B cell (primary cell): ENCODE measurements at regions of chr6 and their contacts with region 1.

Region 1: GRCh38 chr6:90537723-90538258 is 49.1 kb downstream of the MAP3K7 start:
- DNase-seq: peak; percentile 66
- ATAC-seq: peak; percentile 84
- H3K4me3 ChIP-seq: no peak overlapping the region
- H3K4me3 Mint-ChIP-seq: peak overlapping the region; percentile 68
- H3K27ac ChIP-seq: peak overlapping the region; percentile 70 to 79
- H3K27ac Mint-ChIP-seq: peak overlapping the region; percentile 89
- H3K4me1 ChIP-seq: peaks cover 11 to 18% of the 10 kb centered on the region in 2 donors
- H3K4me1 Mint-ChIP-seq: peaks cover 23% of the 10 kb centered on the region
- H3K27me3 ChIP-seq: no peaks in the 10 kb centered on the region
- H3K27me3 Mint-ChIP-seq: no peaks in the 10 kb centered on the region
- CTCF ChIP-seq: no peak

Region 2: GRCh38 chr6:90586836-90587638 is 49.2 kb after region 1 on chr6 and contains the start of gene MAP3K7:
- CTCF ChIA-PET with region 1: no interaction called
- POLR2A ChIA-PET with region 1: no interaction called
- intact Hi-C with region 1: loop called (anchors 5 kb)
- DNase-seq: peak; percentile 97
- ATAC-seq: peak; percentile 85
- H3K4me3 ChIP-seq: peak within 1 kb of the TSS; percentile 91 to 98 (median 96)
- H3K4me3 Mint-ChIP-seq: peak within 1 kb of the TSS; percentile 98
- H3K27ac ChIP-seq: peak within 1 kb of the TSS; percentile 90 to 100
- H3K27ac Mint-ChIP-seq: peak within 1 kb of the TSS; percentile 100
- H3K4me1 ChIP-seq: peaks cover 15 to 30% of the 10 kb centered on the region in 2 donors
- H3K4me1 Mint-ChIP-seq: peaks cover 41% of the 10 kb centered on the region
- H3K27me3 ChIP-seq: peaks cover 0 to 6% (median 2%) of the 10 kb centered on the region in 4 experiments
- H3K27me3 Mint-ChIP-seq: peaks cover 12% of the 10 kb centered on the region
- CTCF ChIP-seq: no peak
- total RNA-seq, gene MAP3K7: 32.8 and 34.4 TPM in 2 replicates